ENCODE measurements at regions of chr3 and their contacts with region 1.

Region 1: GRCh38 chr3:52339612-52340011 is 23.5 kb downstream of the DNAH1 start:
- DNase-seq: peak; percentile 66
- H3K4me3 Mint-ChIP-seq: no peak overlapping the region
- H3K27ac Mint-ChIP-seq: peak overlapping the region; percentile 9
- H3K4me1 Mint-ChIP-seq: peaks cover 6% of the 10 kb centered on the region
- H3K27me3 Mint-ChIP-seq: no peaks in the 10 kb centered on the region

Region 2: DNA sequence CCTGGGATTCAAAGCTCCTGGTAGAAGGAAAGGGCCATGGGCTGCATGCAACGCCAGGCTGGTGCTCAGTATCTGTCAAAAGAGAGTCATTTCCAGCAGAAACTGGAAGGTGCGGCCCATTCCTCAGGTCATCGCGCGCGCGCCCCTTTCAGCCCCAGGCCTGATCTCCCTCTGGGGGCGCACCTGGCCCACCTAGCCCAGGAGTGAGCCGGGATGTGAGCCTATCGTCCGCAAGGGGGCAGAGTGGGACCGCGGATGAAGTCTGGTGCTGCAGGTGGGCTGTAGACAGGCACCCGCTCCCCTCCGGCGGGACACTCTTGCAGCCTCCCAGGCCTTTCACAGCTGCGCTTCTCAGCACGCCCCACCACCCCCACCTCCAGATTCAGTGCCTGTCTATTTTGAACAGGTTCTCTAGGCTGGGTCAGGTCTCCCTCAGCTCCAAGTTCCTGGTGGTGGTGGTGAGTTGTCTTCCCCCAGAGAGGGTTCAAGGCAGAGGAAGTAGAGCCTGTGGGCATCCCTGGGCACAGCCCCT is 338.1 kb before region 1 on chr3:
- CTCF ChIA-PET with region 1: interaction called, 14 read pairs
- DNase-seq: peak; percentile 92
- H3K4me3 Mint-ChIP-seq: no peak overlapping the region
- H3K27ac Mint-ChIP-seq: no peak overlapping the region
- H3K4me1 Mint-ChIP-seq: peaks cover 25% of the 10 kb centered on the region
- H3K27me3 Mint-ChIP-seq: peaks cover 72% of the 10 kb centered on the region

Region 3: GRCh38 chr3:52204337-52205073 is 135.1 kb before region 1 on chr3:
- CTCF ChIA-PET with region 1: no interaction called
- DNase-seq: no peak
- H3K4me3 Mint-ChIP-seq: no peak overlapping the region
- H3K27ac Mint-ChIP-seq: no peak overlapping the region
- H3K4me1 Mint-ChIP-seq: peaks cover 45% of the 10 kb centered on the region
- H3K27me3 Mint-ChIP-seq: no peaks in the 10 kb centered on the region

Region 4: GRCh38 chr3:52220380-52221026 is 119.1 kb before region 1 on chr3:
- CTCF ChIA-PET with region 1: interaction called, 125 read pairs
- DNase-seq: peak; percentile 94
- H3K4me3 Mint-ChIP-seq: peak overlapping the region; percentile 55
- H3K27ac Mint-ChIP-seq: peak overlapping the region; percentile 75
- H3K4me1 Mint-ChIP-seq: peaks cover 96% of the 10 kb centered on the region
- H3K27me3 Mint-ChIP-seq: no peaks in the 10 kb centered on the region

Region 5: DNA sequence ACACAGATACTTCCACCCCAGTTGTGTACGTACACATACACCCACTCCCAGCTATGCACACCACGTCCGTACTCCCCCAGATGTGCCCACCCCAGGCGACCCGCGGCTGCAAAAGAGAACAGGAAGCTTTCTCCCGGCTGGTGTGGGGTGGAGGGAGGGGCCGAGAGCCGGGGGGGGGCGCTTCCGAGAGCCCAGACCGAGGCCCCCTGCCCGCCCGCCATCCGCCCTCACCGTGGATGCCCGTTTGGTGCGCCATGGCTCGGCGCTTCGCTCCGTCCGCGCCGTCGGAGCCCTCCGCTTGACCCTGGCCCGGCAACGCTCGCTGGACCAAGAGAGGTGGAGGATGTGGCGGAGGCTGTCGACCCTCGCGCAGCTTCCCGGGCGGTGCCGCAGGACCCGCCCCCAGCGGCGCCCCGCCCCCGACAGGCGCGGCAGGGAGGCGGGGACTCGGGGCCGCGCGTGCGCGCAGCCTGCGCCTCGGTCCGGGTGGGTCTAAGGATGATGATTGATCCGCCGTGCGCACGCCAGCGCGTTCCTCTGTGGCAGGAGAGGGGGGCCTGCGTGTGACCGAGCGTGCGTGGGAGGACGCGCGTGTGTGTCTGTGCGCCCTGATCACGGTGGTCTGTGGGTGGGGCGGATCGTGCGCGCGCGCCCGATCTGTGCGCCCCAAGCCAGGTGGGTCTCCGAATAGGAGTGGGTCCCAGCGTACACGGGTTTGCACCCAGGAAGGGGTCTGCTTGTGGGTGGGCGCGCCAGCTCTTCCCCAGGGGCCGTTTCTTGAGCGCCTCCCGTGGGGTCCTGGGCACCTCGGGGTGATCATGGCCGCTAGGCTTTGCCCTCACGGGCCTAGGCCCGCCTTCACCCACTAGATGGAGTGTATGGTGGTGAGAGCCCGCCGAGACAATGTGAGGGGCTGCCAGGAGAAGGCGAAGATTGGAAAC is 100.6 kb before region 1 on chr3 and contains the start of gene TWF2:
- CTCF ChIA-PET with region 1: interaction called, 46 read pairs
- DNase-seq: peak; percentile 88
- H3K4me3 Mint-ChIP-seq: peak within 1 kb of the TSS; percentile 96
- H3K27ac Mint-ChIP-seq: peak within 1 kb of the TSS; percentile 96
- H3K4me1 Mint-ChIP-seq: peaks cover 80% of the 10 kb centered on the region
- H3K27me3 Mint-ChIP-seq: no peaks in the 10 kb centered on the region

Region 6: DNA sequence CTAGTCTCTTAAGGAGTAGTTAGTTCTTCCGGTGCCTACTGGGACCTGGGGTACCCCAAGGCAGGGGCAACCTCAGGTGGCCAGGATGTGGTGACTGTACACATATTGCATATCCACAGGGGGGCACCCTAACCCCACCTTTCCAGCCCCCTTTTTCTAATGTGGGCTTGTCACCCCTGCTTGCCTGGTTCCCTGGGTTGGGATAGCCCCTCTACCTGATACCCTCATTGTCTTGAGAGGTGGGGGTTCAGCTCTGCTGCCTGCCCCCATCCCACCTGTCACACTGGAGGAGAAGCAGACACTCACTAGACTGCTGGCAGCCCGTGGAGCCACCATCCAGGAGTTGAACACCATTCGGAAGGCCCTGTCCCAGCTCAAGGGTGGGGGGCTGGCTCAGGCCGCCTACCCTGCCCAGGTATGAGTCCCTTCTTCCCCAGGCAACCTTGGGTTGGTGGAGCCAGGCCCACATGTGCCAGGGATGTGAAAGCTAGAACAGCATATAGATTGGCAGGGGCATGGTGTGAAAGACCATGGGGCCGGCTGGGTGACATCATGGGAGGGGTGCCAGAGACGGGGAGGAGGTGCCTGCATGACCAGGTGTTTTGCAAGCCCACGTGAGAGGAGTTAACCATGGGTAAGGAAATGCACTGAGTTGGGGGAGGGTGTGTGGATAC is 48.0 kb before region 1 on chr3:
- CTCF ChIA-PET with region 1: interaction called, 53 read pairs
- DNase-seq: peak; percentile 71
- H3K4me3 Mint-ChIP-seq: no peak overlapping the region
- H3K27ac Mint-ChIP-seq: peak overlapping the region; percentile 35
- H3K4me1 Mint-ChIP-seq: peaks cover 29% of the 10 kb centered on the region
- H3K27me3 Mint-ChIP-seq: no peaks in the 10 kb centered on the region

Region 7: DNA sequence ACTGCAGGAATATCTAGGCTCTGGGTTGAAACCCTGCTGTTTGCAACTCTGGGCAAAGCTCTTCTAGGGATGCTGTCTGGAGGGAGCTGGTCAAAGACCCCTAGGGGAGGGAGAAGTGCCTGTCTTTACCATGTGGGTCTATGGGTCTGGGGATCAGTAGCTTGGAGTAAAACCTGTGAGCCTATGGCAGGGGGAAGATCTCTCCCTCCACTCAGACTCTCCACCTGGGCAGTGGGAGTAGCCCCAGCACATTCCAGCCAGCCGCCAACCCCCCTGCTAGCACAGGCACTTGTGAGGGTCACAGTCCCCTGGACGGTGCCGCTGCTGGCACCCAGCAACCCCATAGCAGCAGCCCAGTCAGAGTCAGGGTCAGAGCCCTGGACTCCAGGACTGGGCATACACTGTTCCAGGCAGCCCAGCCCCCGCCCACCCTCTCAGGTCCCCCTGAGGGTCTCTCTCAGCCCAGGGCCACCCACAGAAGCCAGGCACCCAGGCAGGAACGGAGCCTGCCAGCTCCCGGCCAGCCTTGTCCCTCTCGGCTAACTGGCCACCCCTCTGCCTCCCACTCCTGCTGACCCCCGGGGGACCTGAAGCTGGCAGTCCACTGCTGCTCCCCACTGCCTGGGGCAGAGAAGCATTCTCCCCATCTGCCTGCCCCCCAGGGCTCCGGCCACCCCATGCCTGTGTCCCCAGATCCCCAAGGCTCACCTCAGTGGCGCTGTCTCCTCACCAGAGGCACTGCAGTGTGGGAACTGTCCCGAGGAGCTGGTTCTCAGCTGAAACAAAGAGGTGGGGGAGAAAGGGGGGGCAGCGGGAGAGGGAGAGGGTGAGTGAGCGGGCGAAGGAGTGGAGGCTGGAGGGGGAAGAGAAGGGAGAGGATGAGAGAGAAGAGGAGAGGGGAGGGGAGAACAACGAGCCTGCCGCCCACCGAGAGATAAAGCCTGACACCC is 41.2 kb before region 1 on chr3:
- CTCF ChIA-PET with region 1: interaction called, 11 read pairs
- DNase-seq: no peak
- H3K4me3 Mint-ChIP-seq: no peak overlapping the region
- H3K27ac Mint-ChIP-seq: no peak overlapping the region
- H3K4me1 Mint-ChIP-seq: no peaks in the 10 kb centered on the region
- H3K27me3 Mint-ChIP-seq: no peaks in the 10 kb centered on the region

Region 8: GRCh38 chr3:52317208-52318000 is 22.2 kb before region 1 on chr3:
- CTCF ChIA-PET with region 1: interaction called, 11 read pairs
- DNase-seq: peak; percentile 86
- H3K4me3 Mint-ChIP-seq: peak overlapping the region; percentile 45
- H3K27ac Mint-ChIP-seq: no peak overlapping the region
- H3K4me1 Mint-ChIP-seq: peaks cover 16% of the 10 kb centered on the region
- H3K27me3 Mint-ChIP-seq: peaks cover 10% of the 10 kb centered on the region

Region 9: DNA sequence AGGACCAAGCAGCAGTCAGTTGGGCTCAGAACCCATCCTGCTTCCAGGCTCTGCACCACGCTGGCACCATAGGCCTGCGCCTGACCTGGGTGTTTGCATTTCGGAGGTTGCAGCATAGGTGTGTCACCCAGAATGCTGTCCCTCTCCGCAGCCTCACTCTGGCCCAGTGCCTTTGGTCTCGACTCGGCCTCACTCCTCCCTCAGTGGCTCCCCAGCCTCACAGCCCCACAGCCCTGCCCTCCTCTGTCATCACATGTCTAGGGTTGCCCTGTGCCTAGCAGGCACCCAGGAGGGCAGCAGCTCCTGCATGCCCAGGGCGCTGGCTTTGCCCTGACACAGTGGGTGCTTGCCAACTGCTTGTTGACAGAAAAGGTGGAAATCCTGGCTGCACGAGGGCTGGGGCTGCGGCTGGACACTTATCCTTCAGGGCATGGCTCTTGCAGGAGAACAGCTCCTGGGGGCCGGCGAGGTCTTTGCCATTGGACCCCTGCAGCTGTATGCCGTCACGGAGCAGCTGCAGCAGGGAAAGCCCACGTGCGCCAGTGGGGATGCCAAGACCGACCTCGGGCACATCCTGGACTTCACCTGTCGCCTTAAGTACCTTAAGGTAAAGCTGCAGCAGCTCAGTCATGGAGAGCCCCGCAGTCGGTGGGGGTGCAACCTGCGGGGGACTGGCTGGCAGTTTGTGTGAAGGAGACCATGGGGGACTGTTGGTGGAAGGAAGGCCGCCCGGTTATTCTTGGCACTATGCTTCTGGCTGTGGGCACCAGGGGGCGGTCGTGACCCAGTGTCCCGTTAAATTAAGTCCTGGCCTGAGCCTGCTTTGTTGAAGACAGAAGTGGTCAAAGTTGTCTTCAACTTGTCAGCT is 132.0 kb after region 1 on chr3:
- CTCF ChIA-PET with region 1: no interaction called
- DNase-seq: peak; percentile 48
- H3K4me3 Mint-ChIP-seq: no peak overlapping the region
- H3K27ac Mint-ChIP-seq: no peak overlapping the region
- H3K4me1 Mint-ChIP-seq: no peaks in the 10 kb centered on the region
- H3K27me3 Mint-ChIP-seq: no peaks in the 10 kb centered on the region

Measured in activated naive CD4-positive, alpha-beta T cell treated with anti-CD3 and anti-CD28 coated beads, Interleukin-2, amount 10 ng/mL, durations not matched to agents 7 days and 5 days (primary cell).